Posterior cingulate gyrus (tissue), 11 donors: ENCODE measurements at regions of chr10 and their contacts with region 1.

Region 1: DNA sequence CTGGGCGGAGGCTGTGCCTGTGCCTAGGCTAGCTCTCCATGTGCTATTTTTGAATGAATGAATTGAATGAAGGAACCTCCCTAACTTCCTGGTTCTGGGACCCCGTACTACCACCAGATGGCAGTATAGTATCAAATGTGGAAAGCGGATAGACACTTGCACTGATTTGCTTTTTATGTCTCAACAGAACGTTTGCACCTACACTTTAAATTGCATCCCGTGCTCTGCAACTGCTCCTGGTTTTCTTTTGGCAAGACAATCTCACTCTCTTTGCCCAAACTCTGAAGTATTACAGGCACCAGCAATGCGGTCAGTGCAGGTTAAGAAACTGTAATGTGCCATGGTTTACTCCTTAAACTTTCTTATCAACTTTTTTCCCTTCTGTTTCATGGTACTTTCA is 6.5 kb downstream of the FZD8 start:
- DNase-seq: peak in 2 of 10 donors; percentile 19 to 41

Region 2: GRCh38 chr10:35236739-35237138 is 398.8 kb before region 1 on chr10:
- intact Hi-C with region 1: loop called (anchors 2 kb)
- DNase-seq: no peak

Region 3: DNA sequence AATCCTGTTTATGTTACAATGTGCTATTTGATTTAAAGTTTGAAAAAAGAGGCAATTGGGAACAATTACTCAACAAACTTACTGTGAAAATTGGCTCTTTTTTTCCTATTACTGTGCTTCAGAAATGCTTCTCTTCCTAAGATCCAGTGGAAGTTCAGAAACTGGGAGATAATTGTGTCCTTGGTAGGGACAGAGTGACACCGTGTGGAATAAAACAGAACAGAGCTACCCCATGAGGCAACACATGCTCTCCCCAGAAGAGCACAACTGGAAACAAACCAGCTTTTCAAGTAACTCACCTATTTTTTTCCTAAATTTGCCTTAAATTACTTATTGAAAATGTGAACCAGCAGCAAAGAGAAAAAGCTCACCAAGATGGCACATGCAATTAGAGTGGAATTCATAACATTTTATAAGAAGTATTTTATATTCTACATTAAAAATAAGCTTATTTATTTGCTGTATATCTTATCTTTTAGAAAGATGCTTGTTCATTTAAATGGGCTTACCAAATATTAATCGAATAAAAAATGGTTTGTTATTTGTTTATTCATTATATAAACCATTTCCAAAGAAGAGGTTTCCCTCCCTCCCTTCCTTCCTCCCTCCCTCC is 1143.8 kb after region 1 on chr10:
- intact Hi-C with region 1: loop called (anchors 1 kb)
- DNase-seq: peak in 3 of 10 donors; percentile 26 to 35 (median 31)

Region 4: DNA sequence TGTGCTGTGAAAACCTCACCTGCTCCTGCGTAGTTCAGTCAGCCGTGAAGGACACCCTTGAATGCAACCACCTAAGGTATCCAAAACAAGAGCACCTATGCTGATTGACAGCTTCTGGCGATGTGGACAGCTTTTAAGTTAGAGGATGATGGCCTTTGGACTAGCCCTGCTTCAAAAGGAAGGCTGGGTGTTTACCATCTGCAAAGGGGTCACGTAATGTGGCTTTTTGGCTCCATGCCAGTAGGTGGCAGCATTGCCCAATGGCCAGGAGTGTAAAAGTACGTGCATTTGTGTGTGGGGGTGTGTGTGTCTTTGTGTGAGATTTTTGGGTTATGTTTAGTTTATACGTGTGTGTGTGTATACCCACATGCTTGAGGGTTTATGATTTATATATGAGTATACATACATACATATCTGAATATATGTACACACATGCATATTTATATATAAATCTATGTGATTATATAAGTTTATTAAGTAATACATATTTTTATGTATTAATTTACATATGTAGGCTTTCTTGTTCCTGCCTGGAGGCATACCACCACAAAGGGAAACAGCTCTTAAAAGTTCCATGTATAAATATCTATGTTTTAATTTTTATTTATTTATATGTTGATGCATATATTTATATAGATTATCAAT is 1253.5 kb after region 1 on chr10:
- intact Hi-C with region 1: loop called (anchors 10 kb)
- DNase-seq: peak in 7 of 10 donors; percentile 20 to 91 (median 50)